ENCODE measurements at regions of chr10 and their contacts with region 1.

Region 1: GRCh38 chr10:34666008-34666705 is 148.9 kb downstream of the PARD3 start:
- DNase-seq: peak; percentile 83
- H3K4me3 ChIP-seq: no peak overlapping the region
- H3K27ac ChIP-seq: no peak overlapping the region
- H3K4me1 ChIP-seq: no peaks in the 10 kb centered on the region
- H3K27me3 ChIP-seq: no peaks in the 10 kb centered on the region
- CTCF ChIP-seq: peak; percentile 45 to 46
- POLR2A ChIP-seq: no peak

Region 2: GRCh38 chr10:34723750-34724149 is 57.6 kb after region 1 on chr10:
- CTCF ChIA-PET with region 1: interaction called, 11 read pairs
- POLR2A ChIA-PET with region 1: no interaction called
- dilution Hi-C with region 1: no loop called
- intact Hi-C with region 1: loop called (anchors 1 kb)
- DNase-seq: peak; percentile 76
- H3K4me3 ChIP-seq: no peak overlapping the region
- H3K27ac ChIP-seq: no peak overlapping the region
- H3K4me1 ChIP-seq: peaks cover 8% of the 10 kb centered on the region
- H3K27me3 ChIP-seq: no peaks in the 10 kb centered on the region
- CTCF ChIP-seq: peak; percentile 26 to 47
- POLR2A ChIP-seq: no peak

Region 3: GRCh38 chr10:34824870-34825269 is 158.7 kb after region 1 on chr10:
- CTCF ChIA-PET with region 1: interaction called, 16 read pairs
- POLR2A ChIA-PET with region 1: no interaction called
- dilution Hi-C with region 1: no loop called
- intact Hi-C with region 1: no loop called
- DNase-seq: no peak
- H3K4me3 ChIP-seq: no peak overlapping the region
- H3K27ac ChIP-seq: no peak overlapping the region
- H3K4me1 ChIP-seq: no peaks in the 10 kb centered on the region
- H3K27me3 ChIP-seq: peaks cover 0 to 8% of the 10 kb centered on the region in 2 experiments
- CTCF ChIP-seq: peak in 1 of 2 donors; percentile 19
- POLR2A ChIP-seq: no peak

Region 4: GRCh38 chr10:34954168-34954567 is 288.0 kb after region 1 on chr10:
- CTCF ChIA-PET with region 1: interaction called, 4 read pairs
- POLR2A ChIA-PET with region 1: no interaction called
- dilution Hi-C with region 1: no loop called
- intact Hi-C with region 1: loop called (anchors 10 kb)
- DNase-seq: no peak
- H3K4me3 ChIP-seq: no peak overlapping the region
- H3K27ac ChIP-seq: no peak overlapping the region
- H3K4me1 ChIP-seq: no peaks in the 10 kb centered on the region
- H3K27me3 ChIP-seq: no peaks in the 10 kb centered on the region
- CTCF ChIP-seq: no peak
- POLR2A ChIP-seq: no peak

Region 5: GRCh38 chr10:35027567-35027966 is 361.4 kb after region 1 on chr10:
- CTCF ChIA-PET with region 1: interaction called, 27 read pairs
- POLR2A ChIA-PET with region 1: no interaction called
- dilution Hi-C with region 1: no loop called
- intact Hi-C with region 1: loop called (anchors 5 kb)
- DNase-seq: peak; percentile 63
- H3K4me3 ChIP-seq: no peak overlapping the region
- H3K27ac ChIP-seq: no peak overlapping the region
- H3K4me1 ChIP-seq: no peaks in the 10 kb centered on the region
- H3K27me3 ChIP-seq: no peaks in the 10 kb centered on the region
- CTCF ChIP-seq: peak in 1 of 2 donors; percentile 6
- POLR2A ChIP-seq: no peak

Measured in endothelial cell of umbilical vein (primary cell).